ENCODE measurements at regions of chr6 and their contacts with region 1.

Region 1: GRCh38 chr6:136289579-136290409 is at the start of gene BCLAF1:
- H3K4me3 Mint-ChIP-seq: peak within 1 kb of the TSS; percentile 99
- H3K27ac Mint-ChIP-seq: peak within 1 kb of the TSS; percentile 100
- H3K4me1 Mint-ChIP-seq: peaks cover 34% of the 10 kb centered on the region
- H3K27me3 Mint-ChIP-seq: no peaks in the 10 kb centered on the region

Region 2: GRCh38 chr6:136249811-136250685 is 39.7 kb before region 1 on chr6 and contains the start of gene MTFR2:
- intact Hi-C with region 1: loop called (anchors 5 kb)
- H3K4me3 Mint-ChIP-seq: peak within 1 kb of the TSS; percentile 98
- H3K27ac Mint-ChIP-seq: peak within 1 kb of the TSS; percentile 88
- H3K4me1 Mint-ChIP-seq: peaks cover 37% of the 10 kb centered on the region
- H3K27me3 Mint-ChIP-seq: no peaks in the 10 kb centered on the region

Region 3: GRCh38 chr6:136306466-136306865 is 16.7 kb after region 1 on chr6:
- intact Hi-C with region 1: no loop called
- H3K4me3 Mint-ChIP-seq: no peak overlapping the region
- H3K27ac Mint-ChIP-seq: no peak overlapping the region
- H3K4me1 Mint-ChIP-seq: peaks cover 10% of the 10 kb centered on the region
- H3K27me3 Mint-ChIP-seq: peaks cover 2% of the 10 kb centered on the region

Measured in dendritic cell treated with granulocyte-macrophage colony-stimulating factor and Interleukin-4, amounts not matched to agents 40 ng/mL and 50 ng/mL, for 4 days (primary cell).